AG04450 (cell line): ENCODE measurements at regions of chr1 and their contacts with region 1.

Region 1: DNA sequence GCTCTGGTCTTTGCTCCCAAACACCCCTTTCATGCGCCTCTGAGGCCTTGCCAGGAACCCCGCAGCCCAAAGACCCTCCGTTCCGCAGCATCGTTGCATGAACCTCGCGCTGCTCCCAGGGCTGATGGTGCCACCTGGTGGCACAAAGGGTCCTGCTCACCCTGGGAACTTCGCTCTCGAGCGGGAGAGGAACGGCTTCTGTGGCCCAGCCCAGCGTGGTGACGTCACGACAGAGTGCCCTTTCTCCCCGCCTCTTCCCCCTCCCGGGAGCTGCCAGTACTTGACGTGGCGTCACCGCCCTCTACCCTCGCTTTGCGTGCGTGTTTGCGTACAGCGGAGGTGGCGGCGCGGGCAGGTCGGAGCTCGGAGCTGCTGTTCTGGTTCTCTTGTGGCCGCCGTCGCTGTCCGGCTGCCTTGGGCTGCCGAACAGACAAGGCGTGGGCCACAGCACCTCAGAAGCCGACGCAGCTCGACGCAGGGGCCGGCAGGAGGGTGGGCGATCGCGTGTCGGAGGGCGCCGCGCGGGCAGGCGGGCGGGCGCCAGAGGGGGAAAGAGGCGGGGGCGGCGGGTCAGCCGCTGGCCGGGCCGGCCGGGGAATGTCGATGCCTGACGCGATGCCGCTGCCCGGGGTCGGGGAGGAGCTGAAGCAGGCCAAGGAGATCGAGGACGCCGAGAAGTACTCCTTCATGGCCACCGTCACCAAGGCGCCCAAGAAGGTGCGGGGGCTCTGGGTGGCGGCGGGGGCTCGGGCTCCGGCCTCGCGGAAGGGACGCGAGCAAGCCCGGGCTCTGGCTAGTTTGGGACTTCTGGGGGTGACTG is at the start of gene AHCYL1:
- DNase-seq: peak; percentile 98
- H3K4me3 ChIP-seq: peak within 1 kb of the TSS; percentile 86
- H3K27ac ChIP-seq: peak within 1 kb of the TSS; percentile 95
- H3K27me3 ChIP-seq: no peaks in the 10 kb centered on the region
- CTCF ChIP-seq: peak; percentile 98
- polyA plus RNA-seq, gene AHCYL1: 120 and 133 TPM in 2 replicates

Region 2: GRCh38 chr1:109579491-109579890 is 405.2 kb before region 1 on chr1:
- CTCF ChIA-PET with region 1: no interaction called
- POLR2A ChIA-PET with region 1: no interaction called
- DNase-seq: no peak
- H3K4me3 ChIP-seq: no peak overlapping the region
- H3K27ac ChIP-seq: no peak overlapping the region
- H3K27me3 ChIP-seq: no peaks in the 10 kb centered on the region
- CTCF ChIP-seq: no peak

Region 3: GRCh38 chr1:109643385-109644230 is 341.1 kb before region 1 on chr1:
- CTCF ChIA-PET with region 1: interaction called, 59 read pairs
- POLR2A ChIA-PET with region 1: interaction called, 4 read pairs
- DNase-seq: no peak
- H3K4me3 ChIP-seq: no peak overlapping the region
- H3K27ac ChIP-seq: no peak overlapping the region
- H3K27me3 ChIP-seq: no peaks in the 10 kb centered on the region
- CTCF ChIP-seq: peak; percentile 87

Region 4: GRCh38 chr1:109790735-109791494 is 193.8 kb before region 1 on chr1:
- CTCF ChIA-PET with region 1: interaction called, 535 read pairs
- POLR2A ChIA-PET with region 1: interaction called, 14 read pairs
- DNase-seq: no peak
- H3K4me3 ChIP-seq: no peak overlapping the region
- H3K27ac ChIP-seq: no peak overlapping the region
- H3K27me3 ChIP-seq: no peaks in the 10 kb centered on the region
- CTCF ChIP-seq: peak; percentile 37

Region 5: DNA sequence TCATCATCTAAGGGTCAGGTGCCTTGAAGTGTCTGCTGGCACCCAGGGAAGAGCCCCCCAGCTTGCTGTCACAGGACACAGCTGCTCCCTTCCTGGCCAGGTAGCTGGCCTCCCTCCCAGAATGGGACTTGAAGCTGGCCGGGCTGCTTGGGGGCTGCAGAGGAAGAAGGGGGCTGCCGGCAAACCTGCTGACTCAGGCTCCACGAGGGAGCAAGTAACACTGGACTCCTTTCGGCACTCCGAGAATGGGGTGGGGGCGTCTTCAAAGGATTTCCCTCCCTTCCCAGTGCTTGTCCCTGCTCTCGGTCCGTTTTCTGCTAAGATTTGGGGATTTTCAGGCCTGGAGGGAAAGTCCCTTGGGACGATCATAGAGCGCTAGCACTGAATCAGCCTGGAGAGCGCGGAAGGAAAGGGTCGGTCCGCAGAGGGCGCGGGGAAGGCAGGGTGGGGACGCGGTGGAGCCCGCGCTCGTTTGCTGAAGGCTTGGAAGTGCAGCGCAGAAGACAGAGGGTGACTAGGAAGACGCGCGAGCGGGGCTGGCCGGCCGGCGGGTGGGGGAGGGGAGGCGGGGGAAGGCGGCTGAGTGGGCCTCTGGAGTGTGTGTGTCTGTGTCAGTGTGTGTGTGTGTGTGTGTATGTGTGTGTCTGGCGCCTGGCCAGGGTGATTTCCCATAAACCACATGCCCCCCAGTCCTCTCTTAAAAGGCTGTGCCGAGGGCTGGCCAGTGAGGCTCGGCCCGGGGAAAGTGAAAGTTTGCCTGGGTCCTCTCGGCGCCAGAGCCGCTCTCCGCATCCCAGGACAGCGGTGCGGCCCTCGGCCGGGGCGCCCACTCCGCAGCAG is 74.3 kb before region 1 on chr1 and contains the start of gene CSF1:
- CTCF ChIA-PET with region 1: interaction called, 9 read pairs
- POLR2A ChIA-PET with region 1: interaction called, 14 read pairs
- DNase-seq: peak; percentile 77
- H3K4me3 ChIP-seq: peak within 1 kb of the TSS; percentile 98
- H3K27ac ChIP-seq: peak within 1 kb of the TSS; percentile 1
- H3K27me3 ChIP-seq: no peaks in the 10 kb centered on the region
- CTCF ChIP-seq: no peak; the same call in 1 of the 2 replicates
- polyA plus RNA-seq, gene CSF1: 70.1 and 84.1 TPM in 2 replicates

Region 6: GRCh38 chr1:109923131-109923945 is 61.3 kb before region 1 on chr1:
- CTCF ChIA-PET with region 1: interaction called, 26 read pairs
- POLR2A ChIA-PET with region 1: interaction called, 4 read pairs
- DNase-seq: no peak
- H3K4me3 ChIP-seq: no peak overlapping the region
- H3K27ac ChIP-seq: peak overlapping the region; percentile 11
- H3K27me3 ChIP-seq: no peaks in the 10 kb centered on the region
- CTCF ChIP-seq: peak; percentile 44

Region 7: DNA sequence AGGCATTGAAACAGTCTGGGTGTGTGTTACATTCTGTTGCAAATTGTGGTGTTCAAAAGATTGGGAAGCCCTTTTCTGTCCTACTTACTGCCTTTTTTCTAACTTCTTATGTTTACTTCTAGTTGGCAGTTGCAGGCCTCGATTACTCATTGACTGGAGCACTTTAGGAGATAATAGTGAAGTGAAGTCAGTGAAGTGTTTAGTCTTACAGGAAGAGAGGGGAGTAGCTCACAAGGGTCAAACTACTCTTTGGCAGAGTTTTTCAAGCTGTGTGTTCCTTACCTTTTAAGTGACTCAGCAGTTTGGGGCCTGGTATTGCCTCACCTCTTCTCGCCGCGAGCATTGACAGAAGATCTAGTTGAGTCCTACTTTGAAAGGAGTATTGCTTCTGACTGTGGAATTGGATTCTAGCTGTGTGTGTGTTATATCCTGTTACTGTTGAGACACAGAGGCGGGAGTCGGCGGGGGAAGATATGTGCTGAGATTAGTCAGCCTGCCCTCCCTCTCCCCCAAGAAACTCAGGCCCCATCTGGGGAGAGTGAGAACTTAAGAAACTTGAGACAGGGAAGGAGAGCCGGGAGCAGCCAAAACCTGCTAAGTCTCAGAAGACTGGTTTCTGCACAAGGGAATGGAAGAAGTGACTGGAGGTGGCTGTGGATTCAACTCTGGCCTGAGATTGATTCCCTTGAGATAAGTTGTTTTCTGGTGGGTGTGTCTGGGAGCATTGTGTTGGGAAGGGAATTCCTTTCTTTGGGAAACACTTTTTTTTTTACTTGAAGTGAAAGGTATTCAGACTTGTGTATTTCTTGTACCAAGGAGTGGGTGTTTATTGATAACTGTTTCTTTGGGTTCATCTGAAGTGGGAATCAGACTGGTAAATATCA is 19.3 kb after region 1 on chr1:
- CTCF ChIA-PET with region 1: interaction called, 28 read pairs
- POLR2A ChIA-PET with region 1: interaction called, 11 read pairs
- DNase-seq: peak; percentile 97
- H3K4me3 ChIP-seq: peak overlapping the region; percentile 57
- H3K27ac ChIP-seq: peak overlapping the region; percentile 90
- H3K27me3 ChIP-seq: no peaks in the 10 kb centered on the region
- CTCF ChIP-seq: no peak

Region 8: DNA sequence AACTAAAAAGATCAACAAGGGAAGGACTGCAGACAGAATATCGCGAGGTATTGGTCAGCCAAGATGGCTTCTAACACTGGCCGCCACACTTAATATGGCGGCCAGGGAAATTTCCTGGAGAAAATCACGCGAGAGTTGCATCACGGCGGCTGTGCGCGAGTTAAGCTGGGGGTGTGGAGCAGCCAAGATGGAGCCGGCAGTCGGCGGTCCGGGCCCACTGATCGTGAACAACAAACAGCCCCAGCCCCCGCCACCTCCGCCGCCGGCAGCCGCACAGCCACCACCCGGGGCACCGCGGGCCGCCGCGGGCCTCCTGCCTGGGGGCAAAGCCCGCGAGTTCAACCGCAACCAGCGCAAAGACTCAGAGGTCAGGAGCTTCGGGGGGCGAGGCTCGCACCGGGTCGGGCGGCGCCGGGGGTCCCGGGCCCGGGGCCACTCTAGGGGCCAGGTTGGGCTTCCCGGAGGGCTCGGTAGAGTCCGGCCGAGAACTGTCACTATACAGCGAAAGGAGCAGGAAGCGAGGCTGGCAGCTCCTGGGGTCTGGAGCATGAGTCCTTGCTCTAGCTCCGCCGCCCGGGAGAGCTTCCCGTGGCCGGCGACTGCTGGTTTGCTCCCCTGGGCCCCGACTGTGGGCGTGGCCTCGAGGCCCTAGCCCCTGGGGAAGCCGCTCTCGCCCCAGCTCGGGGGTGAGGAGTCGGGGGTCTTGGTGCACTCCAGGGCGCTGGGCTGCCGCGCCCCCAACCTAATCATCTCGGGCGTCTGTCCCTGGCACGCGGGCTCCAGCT is 50.0 kb after region 1 on chr1 and contains the start of gene STRIP1:
- CTCF ChIA-PET with region 1: interaction called, 9 read pairs
- POLR2A ChIA-PET with region 1: interaction called, 11 read pairs
- DNase-seq: peak; percentile 95
- H3K4me3 ChIP-seq: peak within 1 kb of the TSS; percentile 81
- H3K27ac ChIP-seq: peak within 1 kb of the TSS; percentile 54
- H3K27me3 ChIP-seq: no peaks in the 10 kb centered on the region
- CTCF ChIP-seq: no peak
- polyA plus RNA-seq, gene STRIP1: 31.3 and 36.2 TPM in 2 replicates